ENCODE measurements at regions of chr4 and their contacts with region 1.

Region 1: DNA sequence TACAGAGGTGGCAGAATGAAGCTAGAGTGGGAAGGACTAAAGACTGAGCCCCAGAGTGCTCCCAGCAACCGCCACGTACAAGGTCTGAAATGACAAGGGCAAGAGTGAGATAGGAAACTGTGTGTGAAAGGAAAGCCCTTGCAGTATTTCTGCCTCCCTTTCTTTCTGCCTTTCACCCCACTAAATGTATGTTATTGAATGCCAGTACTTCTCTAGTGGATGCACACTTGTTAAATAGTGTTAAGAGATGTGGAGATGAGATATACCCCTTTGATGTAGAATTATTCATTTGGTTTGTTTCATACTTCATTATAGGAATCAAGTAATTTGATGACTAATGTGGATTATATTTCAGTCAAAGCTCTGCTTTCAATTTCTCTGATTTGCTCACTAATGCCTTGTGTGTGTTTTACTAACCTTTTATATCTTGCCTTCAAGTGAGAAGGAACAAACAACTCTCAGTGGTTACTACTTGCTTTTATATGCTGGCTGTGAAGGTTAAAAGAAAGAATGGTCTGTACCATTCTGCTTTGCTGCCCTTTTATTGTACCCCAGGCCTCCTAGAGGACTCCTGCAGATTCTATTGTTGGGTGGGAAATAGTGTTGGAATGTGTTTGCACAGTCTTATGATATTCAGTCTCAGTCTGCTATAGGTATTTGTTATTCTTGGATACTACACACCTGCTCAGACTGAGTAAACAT is 8.0 kb upstream of the ANXA3 start:
- DNase-seq: no peak

Region 2: GRCh38 chr4:78092850-78093249 is 450.7 kb before region 1 on chr4:
- CTCF ChIA-PET with region 1: interaction called, 12 read pairs
- POLR2A ChIA-PET with region 1: no interaction called
- DNase-seq: no peak

Region 3: GRCh38 chr4:78155616-78156105 is 387.9 kb before region 1 on chr4:
- CTCF ChIA-PET with region 1: no interaction called
- POLR2A ChIA-PET with region 1: no interaction called
- DNase-seq: no peak

Measured in HEK293T (cell line).